Body of pancreas (tissue), 4 donors: ENCODE measurements at regions of chr6 and their contacts with region 1.

Region 1: DNA sequence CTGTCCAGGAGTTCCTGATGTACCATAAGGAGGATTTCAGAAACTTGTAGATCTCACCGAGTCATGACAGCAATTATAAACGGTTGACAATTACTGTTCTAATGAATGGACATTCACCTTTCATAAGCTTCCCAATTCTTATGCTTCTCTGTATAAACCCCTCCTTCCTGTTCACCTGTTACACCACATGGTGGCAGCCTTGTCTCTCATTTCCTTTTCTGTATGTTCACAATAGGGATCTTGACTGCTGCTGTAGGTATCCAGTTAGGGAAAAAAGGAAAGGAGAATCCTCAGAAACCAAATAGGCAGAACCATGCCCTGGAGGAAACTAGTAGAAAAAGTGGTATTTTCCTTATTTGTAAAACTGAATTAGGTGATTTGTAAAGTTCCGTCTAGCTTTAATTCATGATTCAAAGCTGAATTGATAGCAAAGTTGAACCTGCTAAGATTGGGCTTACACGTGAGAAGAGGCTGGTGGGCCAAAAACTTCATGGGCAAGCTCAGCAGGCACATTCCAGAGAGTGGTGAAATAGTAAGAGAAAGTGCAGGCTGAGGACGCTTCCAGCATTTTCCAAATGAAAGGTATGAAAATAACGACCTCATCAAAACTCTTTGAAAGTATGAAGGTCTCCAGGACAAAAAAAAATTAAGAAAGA is 29.0 kb upstream of the TBPL1 start:
- DNase-seq: peak; percentile 72 to 84 (median 78)
- ATAC-seq: peak; percentile 95
- H3K4me3 ChIP-seq: no peak overlapping the region
- H3K27ac ChIP-seq: no peak overlapping the region
- H3K4me1 ChIP-seq: no peaks in the 10 kb centered on the region
- H3K27me3 ChIP-seq: no peaks in the 10 kb centered on the region
- CTCF ChIP-seq: peak; percentile 46 to 96 (median 90)
- POLR2A ChIP-seq: no peak

Region 2: GRCh38 chr6:134063966-134064445 is 139.9 kb after region 1 on chr6:
- intact Hi-C with region 1: loop called (anchors 10 kb)
- DNase-seq: peak; percentile 63 to 70 (median 66)
- ATAC-seq: peak; percentile 81
- H3K4me3 ChIP-seq: no peak overlapping the region
- H3K27ac ChIP-seq: no peak overlapping the region
- H3K4me1 ChIP-seq: peaks cover 2% of the 10 kb centered on the region
- H3K27me3 ChIP-seq: no peaks in the 10 kb centered on the region
- CTCF ChIP-seq: peak; percentile 65 to 94 (median 81)
- POLR2A ChIP-seq: no peak

Region 3: GRCh38 chr6:134103006-134103405 is 178.9 kb after region 1 on chr6:
- intact Hi-C with region 1: loop called (anchors 5 kb)
- DNase-seq: peak in 1 of 4 donors; percentile 10
- ATAC-seq: peak; percentile 48
- H3K4me3 ChIP-seq: no peak overlapping the region
- H3K27ac ChIP-seq: peak overlapping the region in 1 of 4 donors; percentile 24
- H3K4me1 ChIP-seq: peaks cover 14% of the 10 kb centered on the region
- H3K27me3 ChIP-seq: no peaks in the 10 kb centered on the region
- CTCF ChIP-seq: no peak
- POLR2A ChIP-seq: no peak